ENCODE measurements at regions of chr14 and their contacts with region 1.

Region 1: DNA sequence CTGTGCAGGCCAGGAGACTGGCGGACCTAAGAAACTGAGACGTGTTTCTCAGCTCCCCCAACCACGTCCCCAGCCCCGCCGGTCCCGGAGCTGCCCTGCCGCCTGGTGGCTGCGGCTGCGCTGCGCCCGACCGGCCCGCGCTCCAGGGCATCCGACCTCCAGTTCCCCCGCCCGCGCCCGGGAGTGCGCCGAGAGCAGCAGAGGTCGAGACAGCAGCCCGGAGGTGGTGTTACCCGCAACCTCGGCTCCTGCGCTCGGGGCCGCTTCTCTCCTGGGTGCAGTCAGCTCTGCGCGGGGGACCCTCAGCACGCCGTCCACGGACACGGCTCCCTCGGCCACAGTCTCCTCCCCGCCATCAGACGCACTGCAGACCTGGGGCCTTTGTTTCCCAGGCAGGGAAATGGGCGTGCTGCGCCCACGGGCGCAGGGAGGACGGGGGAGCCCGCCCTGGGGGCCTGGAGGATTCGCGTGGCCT is 21.6 kb upstream of the GPR132 start:
- H3K4me3 Mint-ChIP-seq: peak overlapping the region; percentile 74
- H3K27ac Mint-ChIP-seq: peak overlapping the region; percentile 58
- H3K4me1 Mint-ChIP-seq: peaks cover 30% of the 10 kb centered on the region
- H3K27me3 Mint-ChIP-seq: peaks cover 60% of the 10 kb centered on the region

Region 2: DNA sequence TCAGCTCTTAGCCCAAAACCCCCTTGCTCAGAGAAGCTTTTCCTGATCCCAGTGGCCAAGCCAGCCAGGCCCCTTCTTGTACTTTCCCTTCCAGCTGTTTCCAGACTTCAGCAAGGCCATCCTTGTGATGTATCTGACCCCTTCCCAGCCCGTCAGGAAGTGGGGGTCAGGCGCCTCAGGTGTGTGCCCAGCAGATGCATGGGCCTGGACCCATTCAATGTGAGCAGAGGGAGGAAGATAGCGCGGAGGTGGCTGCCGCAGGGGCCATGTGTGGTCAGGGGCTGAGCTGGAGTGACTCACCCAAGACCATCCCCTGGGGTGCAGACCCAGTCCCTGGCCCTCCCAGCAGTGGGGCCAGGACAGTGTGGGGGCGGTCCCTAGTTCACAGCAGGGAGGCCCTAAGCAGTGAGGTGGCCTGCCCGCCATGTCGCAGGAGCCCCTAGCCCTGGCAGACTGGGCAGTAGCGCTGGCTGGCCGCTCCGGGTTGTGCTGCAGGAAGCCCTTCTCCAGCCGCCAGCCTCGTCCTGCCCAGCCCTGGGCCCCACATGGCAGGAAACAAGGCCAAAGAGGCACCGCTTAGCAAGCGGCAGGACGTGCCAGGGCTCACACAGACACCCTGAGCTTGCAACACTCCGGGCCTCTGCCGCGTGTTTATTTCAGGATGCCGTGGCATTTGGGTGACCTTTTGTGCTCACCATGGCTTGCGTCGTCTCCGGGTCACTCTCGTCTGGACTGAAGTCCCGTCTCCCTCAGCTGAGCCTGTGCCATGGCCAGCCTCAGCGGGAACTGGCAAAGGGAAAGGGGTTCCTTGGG is 350.8 kb before region 1 on chr14:
- intact Hi-C with region 1: no loop called
- H3K4me3 Mint-ChIP-seq: no peak overlapping the region
- H3K27ac Mint-ChIP-seq: peak overlapping the region; percentile 9
- H3K4me1 Mint-ChIP-seq: peaks cover 23% of the 10 kb centered on the region
- H3K27me3 Mint-ChIP-seq: peaks cover 10% of the 10 kb centered on the region

Region 3: DNA sequence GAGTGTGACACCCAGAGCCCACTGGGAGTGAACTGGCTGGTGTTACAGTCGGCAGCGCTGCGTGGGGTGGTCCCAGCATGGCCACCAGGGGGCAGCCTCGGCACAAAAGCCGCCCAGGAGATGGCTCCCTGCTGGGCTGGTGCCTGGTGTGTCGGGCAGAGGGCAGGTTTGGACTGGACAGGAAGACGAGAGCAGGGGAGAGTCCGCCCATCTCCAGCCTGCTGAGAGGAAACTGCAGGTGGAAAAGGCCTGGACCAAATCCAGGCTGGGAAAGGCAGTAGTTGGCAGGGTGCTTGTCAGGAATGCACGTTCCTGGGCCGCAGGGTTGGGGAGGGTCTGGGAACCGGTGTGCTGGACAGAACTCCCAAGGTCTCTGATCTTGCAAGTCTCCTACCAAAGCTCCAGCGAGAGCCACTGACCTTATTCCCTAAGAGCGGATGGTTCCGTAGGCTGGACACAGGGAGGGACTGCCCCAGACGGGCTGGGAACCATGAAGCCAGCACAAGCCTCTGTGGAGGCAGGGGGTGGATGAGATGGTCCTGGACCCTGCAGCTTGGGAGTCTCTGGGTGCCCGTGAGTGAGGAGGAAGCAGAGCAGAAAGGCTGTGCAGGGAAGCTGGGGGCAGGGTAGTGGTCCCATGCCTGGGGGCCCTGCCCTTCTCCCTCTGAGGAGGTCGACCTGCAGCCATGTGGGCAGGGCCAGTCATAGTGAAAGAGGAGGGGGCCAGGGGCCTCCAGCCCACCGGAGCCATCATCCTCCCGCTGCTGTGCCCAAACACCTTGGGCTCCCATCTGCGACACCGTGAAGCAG is 110.5 kb before region 1 on chr14:
- intact Hi-C with region 1: loop called (anchors 5 kb)
- H3K4me3 Mint-ChIP-seq: no peak overlapping the region
- H3K27ac Mint-ChIP-seq: no peak overlapping the region
- H3K4me1 Mint-ChIP-seq: peaks cover 21% of the 10 kb centered on the region
- H3K27me3 Mint-ChIP-seq: peaks cover 57% of the 10 kb centered on the region

Region 4: DNA sequence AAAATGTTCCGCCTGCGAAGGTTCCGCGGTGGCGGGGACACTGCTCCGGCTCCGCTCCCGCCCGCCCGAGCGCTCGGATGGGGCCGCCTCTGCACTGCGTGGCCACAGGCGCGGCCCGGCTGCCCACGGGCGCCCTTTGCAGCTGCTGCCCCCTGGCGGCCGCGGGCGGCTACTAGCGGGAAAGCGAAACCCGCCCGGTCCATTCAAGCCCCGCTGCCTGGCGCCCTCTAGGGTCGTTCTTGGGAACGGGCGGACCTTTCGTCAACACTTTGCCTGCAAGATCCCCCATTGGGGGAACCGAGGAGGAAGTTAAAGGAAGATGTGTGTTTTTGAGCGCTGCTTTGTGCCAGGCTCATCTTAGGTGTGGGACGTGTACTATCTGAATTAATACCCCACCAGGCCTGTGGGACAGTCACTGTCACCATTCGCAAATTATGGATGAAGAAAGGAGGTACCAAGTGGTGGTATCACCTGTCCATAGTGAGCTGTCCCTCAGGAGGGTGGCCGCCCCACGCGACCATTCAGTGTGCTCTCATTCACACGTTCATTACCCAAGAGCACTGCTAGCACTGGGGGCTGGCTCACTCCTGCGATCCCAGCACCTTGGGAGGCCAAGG is 41.1 kb before region 1 on chr14:
- intact Hi-C with region 1: loop called (anchors 5 kb)
- H3K4me3 Mint-ChIP-seq: peak overlapping the region; percentile 6
- H3K27ac Mint-ChIP-seq: no peak overlapping the region
- H3K4me1 Mint-ChIP-seq: peaks cover 46% of the 10 kb centered on the region
- H3K27me3 Mint-ChIP-seq: peaks cover 13% of the 10 kb centered on the region

Region 5: DNA sequence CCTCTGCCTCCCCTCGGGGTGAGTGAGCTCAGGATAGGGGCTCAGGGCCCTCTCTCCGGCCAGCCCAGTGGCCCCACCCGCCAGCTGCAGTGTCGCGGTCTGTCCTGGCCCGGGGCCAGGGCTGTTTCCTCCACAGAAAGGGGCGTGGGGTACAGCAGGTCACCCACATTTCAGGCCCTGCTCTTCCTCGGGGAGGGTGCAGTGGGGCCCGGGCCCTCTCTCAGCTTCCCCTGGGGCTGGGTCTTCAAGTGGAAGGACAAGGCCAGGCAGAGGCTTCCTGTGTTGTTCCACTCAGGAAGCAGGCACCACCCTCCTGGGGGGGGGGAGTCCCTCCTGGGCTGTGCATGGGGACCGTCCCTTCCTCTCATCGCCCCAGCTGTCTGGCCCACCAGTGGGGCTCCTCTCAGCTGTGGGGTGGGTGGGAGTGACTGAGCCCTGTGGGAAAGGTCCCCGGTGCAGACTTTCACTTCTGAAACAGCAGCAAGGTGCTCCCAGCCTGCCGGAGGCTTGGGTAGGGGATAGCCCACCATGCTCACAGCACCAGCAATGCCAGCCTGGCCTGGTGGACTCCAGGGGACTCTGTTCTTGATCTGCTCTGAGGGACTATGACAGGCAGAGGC is 25.3 kb before region 1 on chr14:
- intact Hi-C with region 1: loop called (anchors 2 kb)
- H3K4me3 Mint-ChIP-seq: peak overlapping the region; percentile 76
- H3K27ac Mint-ChIP-seq: peak overlapping the region; percentile 98
- H3K4me1 Mint-ChIP-seq: peaks cover 80% of the 10 kb centered on the region
- H3K27me3 Mint-ChIP-seq: no peaks in the 10 kb centered on the region

Region 6: GRCh38 chr14:105118656-105119403 is 32.0 kb after region 1 on chr14:
- intact Hi-C with region 1: no loop called
- H3K4me3 Mint-ChIP-seq: no peak overlapping the region
- H3K27ac Mint-ChIP-seq: no peak overlapping the region
- H3K4me1 Mint-ChIP-seq: no peaks in the 10 kb centered on the region
- H3K27me3 Mint-ChIP-seq: peaks cover 36% of the 10 kb centered on the region

Region 7: GRCh38 chr14:105132921-105133654 is 46.2 kb after region 1 on chr14:
- intact Hi-C with region 1: no loop called
- H3K4me3 Mint-ChIP-seq: no peak overlapping the region
- H3K27ac Mint-ChIP-seq: no peak overlapping the region
- H3K4me1 Mint-ChIP-seq: no peaks in the 10 kb centered on the region
- H3K27me3 Mint-ChIP-seq: peaks cover 15% of the 10 kb centered on the region

Region 8: GRCh38 chr14:105351920-105352851 is 265.3 kb after region 1 on chr14:
- intact Hi-C with region 1: loop called (anchors 1 kb)
- H3K4me3 Mint-ChIP-seq: no peak overlapping the region
- H3K27ac Mint-ChIP-seq: no peak overlapping the region
- H3K4me1 Mint-ChIP-seq: peaks cover 5% of the 10 kb centered on the region
- H3K27me3 Mint-ChIP-seq: no peaks in the 10 kb centered on the region

Region 9: GRCh38 chr14:105527661-105528581 is 441.1 kb after region 1 on chr14:
- intact Hi-C with region 1: loop called (anchors 5 kb)
- H3K4me3 Mint-ChIP-seq: peak overlapping the region; percentile 80
- H3K27ac Mint-ChIP-seq: peak overlapping the region; percentile 73
- H3K4me1 Mint-ChIP-seq: peaks cover 28% of the 10 kb centered on the region
- H3K27me3 Mint-ChIP-seq: peaks cover 76% of the 10 kb centered on the region

Measured in dendritic cell treated with granulocyte-macrophage colony-stimulating factor and Interleukin-4, amounts not matched to agents 40 ng/mL and 50 ng/mL, for 4 days (primary cell).